Right lobe of liver (tissue), 6 donors: ENCODE measurements at regions of chr1 and their contacts with region 1.

Region 1: DNA sequence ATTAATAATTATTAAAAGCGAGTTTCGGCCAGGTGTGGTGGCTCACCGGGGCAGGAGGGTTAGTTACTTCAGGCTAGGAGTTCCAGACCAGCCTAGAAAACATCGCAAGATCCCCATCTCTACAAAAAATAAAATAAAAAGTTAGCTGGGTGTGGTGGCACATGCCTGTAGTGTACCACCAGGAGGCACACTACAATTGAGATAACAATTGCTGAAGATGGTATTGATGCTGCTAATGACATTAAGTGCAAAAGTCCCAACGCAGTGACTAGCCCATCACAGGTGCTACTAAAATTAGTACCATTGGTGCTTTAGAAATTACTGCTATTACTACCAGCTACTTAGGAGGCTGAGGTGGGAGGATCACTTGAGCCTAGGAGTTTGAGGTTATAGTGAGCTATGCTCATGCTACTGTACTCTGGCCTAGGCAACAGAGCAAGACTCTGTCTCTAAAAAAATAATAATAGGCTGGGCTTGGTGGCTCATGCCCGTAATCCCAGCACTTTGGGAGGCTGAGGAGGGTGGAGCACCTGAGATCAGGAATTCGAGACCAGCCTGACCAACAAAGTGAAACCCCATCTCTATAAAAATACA is 156.6 kb downstream of the GREM2 start:
- DNase-seq: no peak
- ATAC-seq: peak; percentile 89 to 97 (median 90)
- H3K4me3 ChIP-seq: no peak overlapping the region
- H3K27ac ChIP-seq: no peak overlapping the region
- H3K4me1 ChIP-seq: no peaks in the 10 kb centered on the region
- H3K27me3 ChIP-seq: no peaks in the 10 kb centered on the region
- CTCF ChIP-seq: peak; percentile 49 to 82 (median 70)
- POLR2A ChIP-seq: no peak

Region 2: DNA sequence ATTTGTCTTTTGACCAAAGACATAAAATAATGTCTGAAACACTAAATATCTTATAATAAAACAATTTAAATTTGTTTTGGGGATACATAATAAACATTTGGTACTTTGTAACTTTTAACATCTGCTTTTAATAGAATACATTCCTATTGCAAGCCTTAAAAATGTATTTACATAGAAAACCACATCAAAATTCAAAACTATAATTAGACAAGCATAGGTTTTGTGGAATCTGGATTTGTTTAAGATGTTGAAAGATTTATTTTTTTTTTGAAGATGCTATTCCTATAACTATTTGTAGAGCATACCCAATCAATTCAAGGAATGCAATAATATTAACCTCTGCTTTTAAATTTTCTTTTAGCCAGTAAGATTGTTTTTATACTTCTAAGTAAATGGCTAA is 237.9 kb before region 1 on chr1:
- intact Hi-C with region 1: no loop called
- DNase-seq: no peak
- ATAC-seq: no peak
- H3K4me3 ChIP-seq: no peak overlapping the region
- H3K27ac ChIP-seq: no peak overlapping the region
- H3K4me1 ChIP-seq: no peaks in the 10 kb centered on the region
- H3K27me3 ChIP-seq: no peaks in the 10 kb centered on the region
- CTCF ChIP-seq: no peak
- POLR2A ChIP-seq: no peak

Region 3: GRCh38 chr1:240562111-240562590 is 106.8 kb after region 1 on chr1:
- intact Hi-C with region 1: no loop called
- DNase-seq: peak in 1 of 3 donors; percentile 58
- ATAC-seq: peak; percentile 90 to 95 (median 92)
- H3K4me3 ChIP-seq: peak overlapping the region in 2 of 3 donors; percentile 17 to 24
- H3K27ac ChIP-seq: peak overlapping the region; percentile 12 to 81 (median 67)
- H3K4me1 ChIP-seq: peaks cover 0 to 5% (median 0%) of the 10 kb centered on the region in 4 donors
- H3K27me3 ChIP-seq: no peaks in the 10 kb centered on the region
- CTCF ChIP-seq: no peak
- POLR2A ChIP-seq: no peak

Region 4: DNA sequence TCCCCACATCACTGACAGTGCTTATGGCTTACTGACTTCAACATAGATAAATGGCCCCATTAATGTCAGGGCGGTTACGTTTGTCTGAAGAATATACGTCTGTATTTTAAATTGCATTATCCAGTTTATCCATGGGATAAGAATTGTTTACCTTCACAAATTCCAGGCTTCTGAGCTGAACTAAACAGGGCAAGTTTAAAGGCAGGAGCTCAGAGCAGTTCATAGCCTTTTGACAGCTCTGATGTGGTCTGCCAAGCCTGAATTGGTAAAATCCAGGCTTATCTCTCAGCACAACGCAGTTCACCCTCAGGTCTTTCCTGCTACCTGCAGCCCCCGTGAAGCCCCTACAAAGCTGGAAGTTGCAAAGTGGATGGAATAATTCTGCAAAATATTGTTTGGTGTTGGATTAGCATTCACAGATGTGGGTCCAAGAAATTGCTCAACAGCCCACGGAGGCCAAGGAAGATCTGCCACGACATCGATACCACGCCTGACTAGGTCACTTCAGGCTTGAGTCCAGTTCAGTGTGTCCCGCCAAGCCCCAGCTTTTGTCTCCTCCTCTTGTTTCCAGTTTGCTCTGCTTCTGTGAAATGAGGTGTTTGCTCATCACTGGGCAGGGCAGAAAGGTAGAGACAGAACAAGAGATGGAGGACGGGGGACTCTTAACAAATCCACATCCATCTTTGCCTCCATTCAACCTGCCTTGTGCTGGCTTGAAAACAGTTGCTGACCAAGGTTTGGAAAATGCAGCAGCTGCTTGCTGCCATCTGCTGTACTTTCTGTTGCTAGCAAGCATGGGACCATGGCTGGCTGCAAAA is 236.4 kb after region 1 on chr1:
- intact Hi-C with region 1: loop called in 1 of 2 experiments (anchors 10 kb)
- DNase-seq: peak; percentile 33 to 59 (median 58)
- ATAC-seq: peak; percentile 94 to 97 (median 96)
- H3K4me3 ChIP-seq: peak overlapping the region in 2 of 3 donors; percentile 4 to 18
- H3K27ac ChIP-seq: peak overlapping the region in 1 of 3 donors; percentile 6
- H3K4me1 ChIP-seq: no peaks in the 10 kb centered on the region
- H3K27me3 ChIP-seq: no peaks in the 10 kb centered on the region
- CTCF ChIP-seq: peak; percentile 58 to 84 (median 76)
- POLR2A ChIP-seq: no peak